BJ (cell line): ENCODE measurements at regions of chr1 and their contacts with region 1.

Region 1: DNA sequence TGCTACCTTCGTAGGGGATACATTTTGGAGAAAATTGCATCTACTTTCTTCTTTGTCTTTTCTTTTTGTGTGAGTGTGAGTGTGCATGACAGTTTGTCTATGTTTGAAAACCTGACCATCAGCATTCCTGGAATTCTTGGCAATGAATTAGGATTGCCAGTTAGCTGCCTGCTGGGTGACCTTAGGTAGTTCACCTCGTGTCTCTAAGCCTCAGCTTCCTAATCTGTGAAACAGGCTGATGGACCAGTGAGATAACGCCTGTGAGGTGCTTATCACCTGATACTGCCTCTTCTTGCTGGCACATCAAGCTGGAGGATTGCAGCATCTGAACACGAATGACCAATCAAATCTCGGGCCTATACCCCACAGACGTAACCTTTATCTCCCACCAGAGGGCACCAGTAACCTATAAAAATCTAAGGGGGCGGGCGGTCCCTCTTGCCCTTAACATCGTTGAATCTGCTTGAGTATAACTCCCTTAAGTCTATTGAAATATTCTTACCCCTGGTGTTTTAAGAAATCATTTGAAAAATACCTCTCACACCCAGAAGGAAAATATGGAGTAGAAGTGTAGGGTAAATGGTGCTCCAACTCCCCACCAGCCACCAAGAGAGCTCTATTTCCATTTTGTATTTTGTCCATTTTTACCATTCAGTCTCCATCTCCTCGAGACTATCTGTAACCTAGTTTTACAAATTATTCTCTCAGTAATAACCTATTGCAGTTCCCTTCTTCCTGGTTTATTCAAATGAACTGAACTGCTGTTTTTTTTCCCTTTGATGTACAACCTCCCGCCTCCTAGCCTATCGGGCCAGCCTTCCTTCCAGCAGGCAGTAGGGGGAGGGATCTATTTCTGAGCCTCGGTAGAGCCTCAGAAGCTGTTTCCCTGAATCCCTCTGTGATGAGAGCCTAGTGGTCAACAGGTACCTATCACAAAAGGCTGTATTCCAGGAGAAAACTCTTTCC is 49.7 kb downstream of the MDM4 start:
- DNase-seq: peak; percentile 16
- H3K4me3 ChIP-seq: no peak overlapping the region
- H3K27me3 ChIP-seq: no peaks in the 10 kb centered on the region
- CTCF ChIP-seq: peak; percentile 65

Region 2: GRCh38 chr1:204617256-204618147 is 51.6 kb after region 1 on chr1:
- CTCF ChIA-PET with region 1: no interaction called
- POLR2A ChIA-PET with region 1: no interaction called
- DNase-seq: no peak
- H3K4me3 ChIP-seq: no peak overlapping the region
- H3K27me3 ChIP-seq: peaks cover 27% of the 10 kb centered on the region
- CTCF ChIP-seq: no peak

Region 3: DNA sequence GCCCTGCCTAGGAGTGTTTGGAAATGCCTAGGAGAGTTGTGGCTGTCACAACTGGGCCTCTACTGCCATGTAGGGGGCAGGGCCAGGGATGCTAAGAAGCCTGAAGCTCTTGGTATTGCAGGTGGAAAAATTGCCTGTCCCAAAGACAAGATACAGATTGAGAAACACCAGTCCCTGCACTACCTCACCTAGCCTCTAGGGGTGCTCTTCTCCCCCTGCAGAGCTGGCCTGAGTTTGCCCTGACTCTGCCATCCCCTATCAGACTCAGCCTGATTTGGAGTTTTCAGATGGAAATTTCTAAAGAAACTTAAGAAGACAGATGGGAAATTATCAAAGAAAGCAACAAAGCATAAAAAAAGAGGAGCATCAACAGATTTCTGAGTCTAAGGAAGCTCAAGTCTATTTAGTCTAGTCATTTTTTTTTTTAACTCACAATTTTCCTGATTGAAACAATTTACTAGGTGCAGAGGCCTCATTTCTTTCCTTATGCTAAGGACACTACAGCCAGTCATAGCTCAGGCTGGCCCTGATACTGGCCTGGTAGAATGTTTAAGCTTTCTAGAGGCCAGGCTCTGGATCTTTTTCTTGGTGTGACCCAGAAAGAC is 181.0 kb after region 1 on chr1:
- CTCF ChIA-PET with region 1: interaction called, 12 read pairs
- POLR2A ChIA-PET with region 1: no interaction called
- DNase-seq: no peak
- H3K4me3 ChIP-seq: no peak overlapping the region
- H3K27me3 ChIP-seq: peaks cover 12% of the 10 kb centered on the region
- CTCF ChIP-seq: peak; percentile 98

Region 4: GRCh38 chr1:204763706-204764427 is 198.0 kb after region 1 on chr1:
- CTCF ChIA-PET with region 1: interaction called, 32 read pairs
- POLR2A ChIA-PET with region 1: no interaction called
- DNase-seq: peak; percentile 8
- H3K4me3 ChIP-seq: no peak overlapping the region
- H3K27me3 ChIP-seq: peaks cover 14% of the 10 kb centered on the region
- CTCF ChIP-seq: peak; percentile 88

Region 5: GRCh38 chr1:204791453-204792353 is 225.8 kb after region 1 on chr1:
- CTCF ChIA-PET with region 1: interaction called, 12 read pairs
- POLR2A ChIA-PET with region 1: no interaction called
- DNase-seq: no peak
- H3K4me3 ChIP-seq: no peak overlapping the region
- H3K27me3 ChIP-seq: peaks cover 11% of the 10 kb centered on the region
- CTCF ChIP-seq: peak; percentile 88

Region 6: DNA sequence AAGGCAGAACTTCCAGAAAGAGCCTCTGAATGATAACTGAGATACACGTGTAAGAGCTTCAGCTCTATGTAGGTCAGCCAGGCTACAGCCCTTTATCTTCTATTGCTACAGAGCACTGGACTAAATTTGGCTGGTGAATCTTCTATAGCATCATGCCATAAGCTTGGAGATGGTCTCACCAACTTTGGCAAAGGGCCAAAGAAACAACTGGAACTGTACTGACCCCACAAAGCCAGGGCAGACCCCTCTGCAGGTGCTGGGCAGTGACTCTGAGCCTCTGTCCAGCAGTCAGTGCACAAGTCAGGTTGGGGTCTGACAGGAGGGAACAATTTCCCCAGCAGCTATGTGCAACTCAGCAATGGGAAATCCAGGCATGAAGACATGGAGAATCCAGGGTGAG is 246.9 kb after region 1 on chr1:
- CTCF ChIA-PET with region 1: interaction called, 260 read pairs
- POLR2A ChIA-PET with region 1: no interaction called
- DNase-seq: no peak
- H3K4me3 ChIP-seq: no peak overlapping the region
- H3K27me3 ChIP-seq: peaks cover 8% of the 10 kb centered on the region
- CTCF ChIP-seq: no peak